Ascending aorta (tissue), 2 donors: ENCODE measurements at regions of chr10 and their contacts with region 1.

Region 1: GRCh38 chr10:31759799-31760626 is 168.6 kb downstream of the ARHGAP12 start:
- DNase-seq: peak; percentile 95 to 98
- H3K4me3 ChIP-seq: peak overlapping the region; percentile 81 to 84
- H3K27ac ChIP-seq: peak overlapping the region; percentile 92 to 98
- H3K4me1 ChIP-seq: peaks cover 9 to 18% of the 10 kb centered on the region in 2 donors
- H3K27me3 ChIP-seq: no peaks in the 10 kb centered on the region
- CTCF ChIP-seq: no peak

Region 2: DNA sequence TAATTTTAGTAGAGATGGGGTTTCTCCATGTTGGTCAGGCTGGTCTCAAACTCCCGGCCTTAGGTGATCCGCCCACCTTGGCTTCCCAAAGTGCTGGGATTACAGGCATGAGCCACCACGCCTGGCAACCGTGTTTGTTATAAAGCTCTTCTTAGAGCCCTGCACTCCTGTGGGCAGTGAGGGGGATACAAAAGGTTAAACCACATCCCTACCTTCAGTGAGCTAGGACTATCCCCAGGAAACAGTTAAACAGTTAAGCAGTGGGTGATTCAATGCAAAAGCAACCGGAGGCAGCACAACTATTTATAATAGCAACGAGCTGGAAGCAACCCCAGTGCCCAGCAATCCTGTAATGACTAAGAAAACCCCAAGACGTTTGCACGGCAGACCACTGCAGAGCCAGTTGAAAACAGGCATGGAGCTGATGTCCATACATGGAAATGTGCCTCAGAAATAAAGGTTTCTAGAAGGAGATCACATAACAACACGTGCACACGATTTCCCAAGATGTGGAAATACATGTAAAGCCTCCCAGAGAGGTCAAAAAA is 1023.3 kb before region 1 on chr10:
- intact Hi-C with region 1: loop called (anchors 5 kb)
- DNase-seq: peak; percentile 58 to 93
- H3K4me3 ChIP-seq: no peak overlapping the region
- H3K27ac ChIP-seq: peak overlapping the region; percentile 63 to 67
- H3K4me1 ChIP-seq: peaks cover 10 to 12% of the 10 kb centered on the region in 2 donors
- H3K27me3 ChIP-seq: no peaks in the 10 kb centered on the region
- CTCF ChIP-seq: no peak

Region 3: GRCh38 chr10:31697271-31698180 is 62.5 kb before region 1 on chr10:
- intact Hi-C with region 1: loop called (anchors 1 kb)
- DNase-seq: peak; percentile 90 to 98
- H3K4me3 ChIP-seq: peak overlapping the region; percentile 38 to 56
- H3K27ac ChIP-seq: peak overlapping the region; percentile 98 to 99
- H3K4me1 ChIP-seq: peaks cover 13 to 52% of the 10 kb centered on the region in 2 donors
- H3K27me3 ChIP-seq: no peaks in the 10 kb centered on the region
- CTCF ChIP-seq: no peak

Region 4: DNA sequence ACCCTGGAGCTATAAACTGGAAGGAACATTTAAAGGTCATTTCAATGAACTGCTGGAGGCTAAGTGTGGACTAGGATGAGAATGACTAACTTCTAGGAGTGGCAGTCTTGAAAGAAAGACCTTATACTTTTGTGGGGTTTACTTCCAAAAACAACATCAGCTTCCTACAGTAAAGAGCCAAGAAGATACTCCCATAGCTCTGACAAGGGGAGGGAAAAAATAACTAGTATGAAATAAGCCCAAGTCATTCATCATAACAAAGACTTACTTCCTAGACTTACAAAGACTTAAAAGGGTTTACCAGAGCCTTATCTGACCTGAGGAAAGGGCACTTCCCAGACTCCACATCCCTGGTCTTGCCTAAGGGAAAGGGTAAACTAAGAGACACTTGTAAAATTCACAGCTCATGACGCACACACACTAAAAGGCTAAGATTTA is 137.0 kb after region 1 on chr10:
- intact Hi-C with region 1: no loop called
- DNase-seq: no peak
- H3K4me3 ChIP-seq: no peak overlapping the region
- H3K27ac ChIP-seq: peak overlapping the region; percentile 6 to 51
- H3K4me1 ChIP-seq: peaks cover 0 to 13% of the 10 kb centered on the region in 2 donors
- H3K27me3 ChIP-seq: no peaks in the 10 kb centered on the region
- CTCF ChIP-seq: no peak

Region 5: GRCh38 chr10:32481606-32482005 is 721.6 kb after region 1 on chr10:
- intact Hi-C with region 1: no loop called
- DNase-seq: no peak
- H3K4me3 ChIP-seq: no peak overlapping the region
- H3K27ac ChIP-seq: no peak overlapping the region
- H3K4me1 ChIP-seq: no peaks in the 10 kb centered on the region
- H3K27me3 ChIP-seq: no peaks in the 10 kb centered on the region
- CTCF ChIP-seq: no peak